HepG2 (cell line): ENCODE measurements at regions of chr18 and their contacts with region 1.

Region 1: GRCh38 chr18:47756364-47757016 is 174.0 kb downstream of the SMAD2 start:
- DNase-seq: peak; percentile 46
- ATAC-seq: peak; percentile 80
- H3K4me3 ChIP-seq: no peak overlapping the region
- H3K27ac ChIP-seq: no peak overlapping the region
- H3K4me1 ChIP-seq: no peaks in the 10 kb centered on the region
- H3K27me3 ChIP-seq: peaks cover 0 to 1% of the 10 kb centered on the region in 2 experiments; a peak in 1 of 5 replicates
- CTCF ChIP-seq: peak; percentile 92
- EP300 ChIP-seq: no peak
- POLR2A ChIP-seq: no peak
- RAD21 ChIP-seq: 0 out of 2 replicates have a peak, but pooled peaks have one; percentile 31

Region 2: GRCh38 chr18:47100214-47100831 is 656.2 kb before region 1 on chr18:
- CTCF ChIA-PET with region 1: interaction called, 3 read pairs
- POLR2A ChIA-PET with region 1: no interaction called
- in situ Hi-C with region 1: no loop called
- intact Hi-C with region 1: loop called (anchors 5 kb)
- DNase-seq: peak; percentile 44
- ATAC-seq: peak; percentile 86
- H3K4me3 ChIP-seq: no peak overlapping the region
- H3K27ac ChIP-seq: no peak overlapping the region
- H3K4me1 ChIP-seq: peaks cover 18% of the 10 kb centered on the region
- H3K27me3 ChIP-seq: no peaks in the 10 kb centered on the region
- CTCF ChIP-seq: peak; percentile 81
- EP300 ChIP-seq: no peak
- POLR2A ChIP-seq: no peak
- RAD21 ChIP-seq: peak; percentile 79

Region 3: DNA sequence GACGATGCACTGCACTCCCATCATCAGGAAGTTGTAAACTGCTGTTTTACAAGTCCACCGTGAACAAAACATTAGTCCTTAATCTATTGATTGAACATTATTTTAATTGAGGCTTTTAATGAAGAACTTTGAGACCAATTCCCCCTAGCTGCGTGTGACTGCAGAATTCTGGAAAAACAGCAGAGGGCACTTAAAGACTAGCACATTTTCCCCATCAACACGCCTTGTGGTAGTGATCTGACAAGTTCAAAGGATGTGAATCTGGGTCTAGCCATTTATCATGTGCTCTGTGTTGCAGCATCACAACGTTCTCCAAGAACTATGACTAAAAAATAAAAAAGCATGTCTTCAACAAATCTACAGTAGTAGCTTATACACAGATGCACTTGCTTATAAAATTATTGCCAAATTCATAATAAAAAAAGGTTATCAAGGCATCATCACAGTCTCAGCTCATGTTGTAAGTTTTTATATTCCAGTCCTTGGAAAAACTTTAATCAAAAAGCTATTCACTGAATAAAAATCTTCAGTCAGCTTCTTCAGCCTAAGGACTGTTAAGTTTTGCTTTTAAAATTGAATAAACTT is 540.8 kb before region 1 on chr18:
- CTCF ChIA-PET with region 1: interaction called, 3 read pairs
- POLR2A ChIA-PET with region 1: no interaction called
- in situ Hi-C with region 1: no loop called
- intact Hi-C with region 1: loop called (anchors 1 kb)
- DNase-seq: peak; percentile 44
- ATAC-seq: peak; percentile 69
- H3K4me3 ChIP-seq: no peak overlapping the region
- H3K27ac ChIP-seq: no peak overlapping the region
- H3K4me1 ChIP-seq: no peaks in the 10 kb centered on the region
- H3K27me3 ChIP-seq: peaks cover 0 to 3% of the 10 kb centered on the region in 2 experiments; a peak in 2 of 5 replicates
- CTCF ChIP-seq: peak; percentile 74
- EP300 ChIP-seq: no peak
- POLR2A ChIP-seq: no peak
- RAD21 ChIP-seq: peak; percentile 56

Region 4: DNA sequence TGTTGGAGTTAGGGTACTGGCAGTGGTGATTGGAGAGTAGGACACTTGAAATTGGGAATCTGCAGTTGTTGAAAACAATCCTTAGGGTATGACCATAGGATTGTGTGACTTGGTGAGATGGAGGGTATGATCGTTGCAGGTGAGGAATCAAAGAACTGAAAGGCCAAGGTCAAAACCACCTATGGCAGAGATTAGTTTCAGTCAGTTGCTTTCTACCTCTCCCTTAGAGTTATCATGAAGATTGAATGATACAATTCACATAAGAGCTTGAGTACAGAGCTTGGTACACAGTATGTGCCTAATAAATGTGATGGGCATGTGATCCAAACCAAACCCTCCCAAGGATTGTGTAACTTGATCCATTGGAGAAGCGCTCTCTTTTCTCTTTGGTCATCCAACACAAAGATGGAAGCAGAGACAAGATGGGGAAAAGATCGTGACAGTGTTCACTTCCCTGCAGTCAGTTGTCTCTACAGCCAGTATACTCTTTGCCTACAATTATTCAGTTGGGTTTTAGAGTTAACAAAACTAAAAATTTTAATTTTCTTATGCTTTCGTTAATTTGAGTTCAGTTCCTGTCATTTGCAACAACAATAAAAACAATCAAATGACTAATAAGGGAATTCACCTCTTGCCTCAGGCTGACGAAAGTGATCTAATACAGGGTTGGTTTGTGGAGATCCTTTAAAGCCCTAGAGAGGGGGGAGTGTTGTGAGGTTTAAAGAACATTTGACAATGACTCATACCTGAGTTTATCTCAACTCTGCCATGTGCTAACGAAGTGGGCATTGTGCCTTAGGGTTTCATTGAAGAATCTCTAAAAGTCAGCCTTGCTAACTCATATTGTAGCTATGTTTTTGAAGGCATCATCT is 188.7 kb after region 1 on chr18:
- CTCF ChIA-PET with region 1: no interaction called
- POLR2A ChIA-PET with region 1: no interaction called
- in situ Hi-C with region 1: no loop called
- intact Hi-C with region 1: no loop called
- DNase-seq: peak; percentile 2
- ATAC-seq: no peak
- H3K4me3 ChIP-seq: no peak overlapping the region
- H3K27ac ChIP-seq: no peak overlapping the region
- H3K4me1 ChIP-seq: no peaks in the 10 kb centered on the region
- H3K27me3 ChIP-seq: 0 out of 5 replicates have a peak, but pooled peaks cover 0 to 10% of the 10 kb centered on the region in 2 experiments
- CTCF ChIP-seq: no peak
- EP300 ChIP-seq: no peak
- POLR2A ChIP-seq: no peak
- RAD21 ChIP-seq: no peak